HepG2 (cell line): ENCODE measurements at regions of chr3 and their contacts with region 1.

Region 1: DNA sequence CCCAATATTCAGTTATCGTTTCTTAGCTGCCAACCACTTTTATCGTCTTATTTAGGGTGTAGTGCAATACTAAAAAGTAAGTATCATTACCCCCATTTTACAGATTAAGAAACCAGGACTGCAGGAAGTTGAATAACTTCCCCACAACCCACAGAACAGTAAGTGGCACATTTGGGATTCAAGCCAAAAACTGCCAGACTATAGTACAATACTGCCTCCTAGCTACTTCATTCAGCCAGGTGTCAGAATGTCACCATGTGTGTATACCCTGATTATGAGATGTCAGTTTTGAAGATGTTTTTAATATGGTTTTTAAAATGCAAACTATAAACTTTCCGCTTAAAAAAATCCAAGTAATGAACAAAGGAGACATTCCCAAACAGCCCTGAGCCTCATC is 74.2 kb upstream of the PROK2 start:
- DNase-seq: peak; percentile 16
- ATAC-seq: peak; percentile 61; the same call in 1 of the 3 replicates
- H3K4me3 ChIP-seq: no peak overlapping the region
- H3K27ac ChIP-seq: no peak overlapping the region
- H3K4me1 ChIP-seq: no peaks in the 10 kb centered on the region
- H3K27me3 ChIP-seq: peaks cover 2 to 10% of the 10 kb centered on the region in 2 experiments; a peak in 3 of 5 replicates
- CTCF ChIP-seq: peak; percentile 48
- EP300 ChIP-seq: no peak
- POLR2A ChIP-seq: no peak
- RAD21 ChIP-seq: no peak

Region 2: GRCh38 chr3:71725279-71725991 is 133.7 kb before region 1 on chr3 and contains the start of gene EIF4E3:
- CTCF ChIA-PET with region 1: no interaction called
- POLR2A ChIA-PET with region 1: no interaction called
- in situ Hi-C with region 1: loop called (anchors 5 kb)
- intact Hi-C with region 1: loop called (anchors 1 kb)
- DNase-seq: no peak
- ATAC-seq: peak; percentile 24
- H3K4me3 ChIP-seq: peak within 1 kb of the TSS; percentile 50 to 74 (median 62); a peak in 5 of 6 replicates
- H3K27ac ChIP-seq: no peak within 1 kb of the TSS
- H3K4me1 ChIP-seq: peaks cover 6% of the 10 kb centered on the region; the same call in 1 of the 2 replicates
- H3K27me3 ChIP-seq: peaks cover 8 to 53% of the 10 kb centered on the region in 2 experiments; a peak in 4 of 5 replicates
- CTCF ChIP-seq: no peak
- EP300 ChIP-seq: no peak
- POLR2A ChIP-seq: no peak
- RAD21 ChIP-seq: no peak
- total RNA-seq, gene EIF4E3: 0.06 and 0.07 TPM in 2 replicates